ENCODE measurements at regions of chr12 and their contacts with region 1.

Region 1: GRCh38 chr12:63836936-63837335 is 7.6 kb upstream of the SRGAP1 start:
- DNase-seq: no peak
- H3K4me3 ChIP-seq: no peak overlapping the region
- H3K27me3 ChIP-seq: no peaks in the 10 kb centered on the region
- CTCF ChIP-seq: no peak

Region 2: DNA sequence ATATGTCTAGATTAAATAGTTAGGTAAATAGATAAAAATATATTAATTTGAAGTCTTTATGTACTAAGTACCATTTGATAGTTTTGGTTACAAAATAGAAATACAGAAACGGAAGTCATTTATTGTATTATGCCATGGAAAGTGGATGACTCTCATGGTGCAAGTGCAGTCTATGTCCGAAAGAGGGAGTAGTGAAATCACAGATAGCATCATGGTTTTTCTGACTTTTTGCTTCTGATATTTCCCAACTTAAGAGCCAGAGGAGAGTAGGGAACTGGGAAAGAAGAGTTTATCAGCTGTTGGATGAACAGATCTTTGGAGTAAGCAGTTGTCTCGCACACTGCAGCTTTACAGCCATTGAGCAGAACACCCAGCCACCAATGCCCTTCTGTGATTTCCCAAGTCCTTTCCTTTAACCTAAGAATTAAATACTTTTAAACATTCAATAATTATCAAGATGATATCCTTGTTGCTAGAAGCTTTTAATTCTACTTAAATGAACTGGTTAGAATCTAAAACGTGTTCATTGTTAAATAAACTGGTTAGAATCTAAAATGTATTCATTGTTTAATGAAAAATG is 10.8 kb before region 1 on chr12:
- CTCF ChIA-PET with region 1: interaction called, 12 read pairs
- POLR2A ChIA-PET with region 1: no interaction called
- DNase-seq: no peak
- H3K4me3 ChIP-seq: no peak overlapping the region
- H3K27me3 ChIP-seq: no peaks in the 10 kb centered on the region
- CTCF ChIP-seq: peak; percentile 81

Region 3: DNA sequence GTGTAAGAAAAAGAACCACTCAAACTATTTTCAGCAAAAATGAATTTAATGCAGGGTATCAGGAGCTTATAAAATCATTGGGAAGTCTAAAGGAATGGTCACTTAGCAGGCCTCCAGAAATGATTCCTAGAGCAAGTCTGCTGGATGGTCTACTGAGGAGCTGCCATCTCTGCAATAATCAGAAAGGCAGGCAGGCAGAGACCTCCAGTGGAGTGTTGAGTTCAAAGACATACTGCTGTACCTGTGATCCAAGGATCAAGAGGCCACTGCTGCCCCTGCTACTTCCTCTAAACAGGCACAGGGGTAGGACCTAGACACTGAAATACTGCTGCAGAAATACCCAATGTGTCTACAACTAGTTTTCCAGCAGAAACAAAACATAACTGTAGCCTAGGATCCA is 399.6 kb after region 1 on chr12:
- CTCF ChIA-PET with region 1: interaction called, 14 read pairs
- POLR2A ChIA-PET with region 1: no interaction called
- DNase-seq: no peak
- H3K4me3 ChIP-seq: no peak overlapping the region
- H3K27me3 ChIP-seq: no peaks in the 10 kb centered on the region
- CTCF ChIP-seq: 0 out of 2 replicates have a peak, but pooled peaks have one; percentile 5

Region 4: DNA sequence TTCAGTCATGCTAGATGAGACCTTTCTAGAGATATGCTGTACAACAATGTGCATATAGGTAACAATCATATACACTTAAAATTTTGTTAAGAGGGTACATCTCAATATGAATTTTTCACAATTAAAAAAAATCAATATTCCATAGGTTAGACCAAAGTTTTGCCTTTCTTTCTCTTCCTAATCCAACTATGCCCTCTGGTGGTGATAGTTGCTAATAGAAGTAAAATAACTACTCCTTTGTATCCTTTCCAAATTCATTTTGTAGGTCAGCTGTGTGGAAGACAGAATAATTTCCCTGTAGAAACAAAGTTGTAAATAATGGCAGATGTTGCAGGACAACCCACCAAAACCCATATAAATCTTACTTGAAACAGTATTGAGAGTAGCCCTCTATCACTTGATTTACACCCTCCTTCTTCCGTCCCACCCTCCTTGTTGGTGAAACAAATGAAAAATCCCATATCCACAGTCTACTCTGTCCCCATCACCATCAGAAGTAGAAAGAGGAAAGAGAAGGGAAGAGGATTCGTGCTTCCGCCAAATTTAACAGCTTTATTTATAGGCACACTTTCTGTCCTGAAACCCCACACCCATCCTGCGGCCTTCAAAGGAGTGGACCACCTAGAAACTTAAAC is 419.3 kb after region 1 on chr12:
- CTCF ChIA-PET with region 1: interaction called, 52 read pairs
- POLR2A ChIA-PET with region 1: no interaction called
- DNase-seq: no peak
- H3K4me3 ChIP-seq: no peak overlapping the region
- H3K27me3 ChIP-seq: no peaks in the 10 kb centered on the region
- CTCF ChIP-seq: peak; percentile 55

Measured in BJ (cell line).